ENCODE measurements at regions of chr7 and their contacts with region 1.

Region 1: DNA sequence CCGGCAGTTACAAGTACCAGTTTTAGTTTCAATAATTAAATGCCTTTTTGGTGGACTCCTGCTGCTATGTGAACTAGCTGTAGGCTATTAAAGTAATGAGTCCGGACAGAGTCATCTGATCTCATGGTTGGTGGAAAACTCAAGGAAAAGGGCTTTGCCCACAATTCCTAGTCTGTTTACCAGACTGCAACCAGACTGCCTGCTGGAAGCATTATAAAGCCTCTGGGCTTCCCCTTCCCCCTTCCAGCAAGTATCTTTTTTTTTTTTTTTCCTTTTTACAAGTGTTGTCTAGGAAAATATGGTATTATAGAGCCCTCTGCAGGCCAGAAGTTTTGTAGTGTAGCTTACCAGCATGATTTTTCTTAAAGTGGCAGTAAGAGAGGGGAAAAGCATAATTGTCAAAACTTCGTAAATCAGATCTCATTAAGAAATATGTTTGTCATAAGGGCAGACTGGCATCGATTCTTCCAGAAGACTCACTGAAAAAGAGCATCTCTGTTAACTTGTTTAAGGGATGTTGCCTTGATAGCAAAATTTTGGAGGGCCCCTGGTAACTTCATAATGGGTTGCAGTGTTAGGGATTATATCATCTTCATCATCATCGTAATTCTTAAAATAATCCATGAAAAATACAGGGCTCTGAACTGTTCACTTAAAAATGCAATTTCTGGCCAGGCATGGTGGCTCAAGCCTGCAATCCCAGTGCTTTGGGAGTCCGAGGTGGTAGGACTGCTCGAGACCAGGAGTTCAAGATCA is 181.3 kb downstream of the TAX1BP1 start:
- DNase-seq: no peak
- H3K4me3 Mint-ChIP-seq: no peak overlapping the region
- H3K27ac Mint-ChIP-seq: no peak overlapping the region
- H3K4me1 Mint-ChIP-seq: no peaks in the 10 kb centered on the region
- H3K27me3 Mint-ChIP-seq: no peaks in the 10 kb centered on the region

Region 2: DNA sequence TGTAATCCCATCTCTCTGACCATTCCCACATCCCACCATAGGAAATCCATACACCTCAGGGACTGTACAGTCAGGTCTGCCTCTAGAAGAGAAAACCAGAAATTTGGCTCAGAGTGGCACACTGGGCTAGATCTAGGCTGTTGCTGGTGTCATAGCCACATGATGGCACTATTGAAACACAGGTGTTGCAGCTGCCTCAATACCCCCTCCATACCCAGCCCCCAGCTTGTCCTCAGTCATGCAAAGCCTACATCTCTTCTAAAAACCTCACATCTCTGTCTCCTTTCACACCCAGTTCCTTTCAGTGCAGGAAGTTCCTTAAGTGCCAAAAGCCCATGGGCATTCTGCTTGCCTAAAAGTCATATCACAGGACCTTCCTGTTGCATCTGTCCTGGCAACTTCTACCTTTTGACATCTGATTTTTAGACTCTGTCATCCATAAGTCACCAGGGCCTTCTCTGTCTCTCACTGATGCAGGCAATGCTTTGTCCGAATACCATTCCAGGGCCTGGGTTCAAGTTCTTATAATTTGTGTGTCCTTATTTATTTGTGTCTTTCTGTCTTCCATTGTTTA is 231.6 kb before region 1 on chr7:
- CTCF ChIA-PET with region 1: no interaction called
- POLR2A ChIA-PET with region 1: no interaction called
- intact Hi-C with region 1: loop called (anchors 10 kb)
- DNase-seq: peak; percentile 24
- H3K4me3 Mint-ChIP-seq: no peak overlapping the region
- H3K27ac Mint-ChIP-seq: no peak overlapping the region
- H3K4me1 Mint-ChIP-seq: no peaks in the 10 kb centered on the region
- H3K27me3 Mint-ChIP-seq: peaks cover 11% of the 10 kb centered on the region

Measured in activated CD4-positive, alpha-beta memory T cell treated with anti-CD3 and anti-CD28 coated beads for 36 hours (primary cell).